A549 (cell line): ENCODE measurements at regions of chr3 and their contacts with region 1.

Region 1: DNA sequence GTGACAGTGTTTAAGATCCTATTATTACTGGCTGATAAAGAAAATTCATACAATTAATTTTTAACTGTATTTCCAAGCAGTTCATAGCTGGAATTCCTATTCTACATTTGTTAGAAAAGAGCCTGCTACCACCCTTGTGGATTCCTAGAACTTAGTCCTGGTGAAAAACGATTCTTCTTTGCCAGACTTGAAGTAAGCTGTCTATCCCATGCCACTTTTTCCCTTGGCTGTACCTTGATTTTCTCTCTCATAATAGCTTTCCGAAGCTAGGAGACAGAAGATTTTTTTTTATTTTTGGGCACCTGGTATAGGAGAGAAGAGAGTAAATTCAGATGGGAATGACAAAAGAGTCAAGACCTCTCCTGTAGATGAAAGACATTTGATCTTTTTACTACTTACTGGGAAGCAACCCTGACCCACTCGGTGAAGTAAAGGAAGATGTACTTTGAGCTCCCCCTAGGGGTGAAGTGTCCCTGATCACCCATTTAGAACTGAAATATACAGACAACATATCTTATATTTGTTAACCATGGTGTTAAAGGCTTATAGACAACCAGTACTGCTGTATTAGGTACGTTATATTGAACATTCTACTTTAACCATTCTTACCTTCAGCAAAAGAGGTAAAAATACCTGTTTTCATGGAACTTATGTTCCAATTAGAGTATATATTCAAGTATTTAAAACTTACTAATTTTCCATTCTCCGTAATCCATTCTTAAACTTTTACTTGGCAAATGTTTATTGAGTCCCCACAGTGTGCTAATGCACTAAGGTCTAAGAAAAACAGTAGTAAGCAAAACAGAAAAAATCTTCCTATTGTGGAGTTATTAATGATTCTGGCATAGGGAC is 36.2 kb upstream of the C3orf38 start:
- DNase-seq: peak; percentile 37 to 72
- ATAC-seq: peak; percentile 98 to 99
- H3K4me3 ChIP-seq: no peak overlapping the region
- H3K27ac ChIP-seq: no peak overlapping the region
- H3K4me1 ChIP-seq: peaks cover 3% of the 10 kb centered on the region; the same call in 1 of the 3 replicates
- CTCF ChIP-seq: peak; percentile 77
- EP300 ChIP-seq: no peak
- POLR2A ChIP-seq: no peak
- RAD21 ChIP-seq: peak; percentile 65 to 67

Region 2: DNA sequence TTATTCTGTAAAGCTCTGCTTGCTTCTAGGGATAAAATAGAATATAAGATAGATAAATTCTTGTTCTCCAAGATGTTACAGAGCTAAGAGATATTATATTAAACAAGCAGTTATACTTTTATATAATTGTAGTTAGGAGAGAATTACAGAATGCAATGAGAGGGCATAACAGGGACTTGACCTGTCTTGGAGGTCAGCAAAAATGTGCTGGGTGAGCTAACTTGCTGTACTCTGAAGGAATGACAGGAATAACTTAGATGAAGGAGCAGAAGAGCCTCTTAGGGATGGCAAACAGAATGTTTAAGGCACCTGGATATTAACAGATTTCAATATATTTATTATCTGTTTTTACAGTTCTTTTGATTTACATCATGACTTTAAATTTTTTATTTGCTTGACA is 21.3 kb before region 1 on chr3:
- CTCF ChIA-PET with region 1: interaction called, 13 read pairs
- POLR2A ChIA-PET with region 1: no interaction called
- DNase-seq: no peak
- ATAC-seq: no peak
- H3K4me3 ChIP-seq: no peak overlapping the region
- H3K27ac ChIP-seq: no peak overlapping the region
- H3K4me1 ChIP-seq: no peaks in the 10 kb centered on the region
- CTCF ChIP-seq: no peak
- EP300 ChIP-seq: no peak
- POLR2A ChIP-seq: no peak
- RAD21 ChIP-seq: no peak